PC-9 (cell line): ENCODE measurements at regions of chr1 and their contacts with region 1.

Region 1: DNA sequence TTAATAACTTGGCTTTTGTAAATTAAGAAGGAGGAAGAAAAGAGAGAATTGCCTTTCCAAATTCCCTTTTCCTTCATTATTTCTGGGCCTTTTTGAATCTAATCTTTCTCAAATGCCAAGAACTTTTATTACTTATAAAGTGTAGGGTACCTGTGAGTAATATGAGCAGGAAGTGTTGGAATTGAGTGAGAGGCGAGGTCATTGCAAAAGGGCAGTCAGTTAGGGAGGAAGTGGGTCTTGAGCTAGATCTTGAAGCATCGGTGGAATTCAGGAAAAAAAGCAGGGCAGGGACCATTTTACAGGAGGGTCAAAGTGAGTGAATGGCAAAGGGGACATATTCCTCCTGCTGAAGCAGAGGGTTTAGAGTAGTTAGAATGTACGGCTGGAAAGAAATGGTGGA is 23.4 kb downstream of the DDI2 start:
- DNase-seq: no peak
- H3K4me3 ChIP-seq: no peak overlapping the region
- H3K27ac ChIP-seq: 0 out of 2 replicates have a peak overlapping the region, but pooled peaks have one; percentile 16
- H3K4me1 ChIP-seq: no peaks in the 10 kb centered on the region
- H3K27me3 ChIP-seq: no peaks in the 10 kb centered on the region
- CTCF ChIP-seq: no peak

Region 2: DNA sequence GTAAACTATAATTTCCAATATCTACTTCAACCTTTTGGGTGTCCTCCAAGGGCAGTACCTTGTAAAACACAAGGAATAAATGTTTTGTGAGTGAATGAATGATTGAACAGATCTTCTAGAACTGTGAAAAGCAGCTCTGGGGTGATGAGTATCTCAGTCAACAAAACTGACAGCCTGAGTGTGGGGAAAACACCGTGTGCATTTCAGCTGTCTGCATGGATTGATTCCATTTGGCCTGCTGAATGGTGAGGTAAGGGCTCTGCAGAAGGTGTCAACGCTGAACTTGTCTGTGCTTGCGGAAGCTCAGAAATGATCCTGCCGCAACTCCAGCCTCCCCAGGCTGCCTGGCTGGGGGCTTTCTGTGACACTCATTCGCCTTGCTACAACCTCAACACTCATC is 48.4 kb before region 1 on chr1:
- CTCF ChIA-PET with region 1: interaction called, 11 read pairs
- POLR2A ChIA-PET with region 1: no interaction called
- intact Hi-C with region 1: no loop called
- DNase-seq: no peak
- H3K4me3 ChIP-seq: no peak overlapping the region
- H3K27ac ChIP-seq: no peak overlapping the region
- H3K4me1 ChIP-seq: no peaks in the 10 kb centered on the region
- H3K27me3 ChIP-seq: no peaks in the 10 kb centered on the region
- CTCF ChIP-seq: no peak

Region 3: DNA sequence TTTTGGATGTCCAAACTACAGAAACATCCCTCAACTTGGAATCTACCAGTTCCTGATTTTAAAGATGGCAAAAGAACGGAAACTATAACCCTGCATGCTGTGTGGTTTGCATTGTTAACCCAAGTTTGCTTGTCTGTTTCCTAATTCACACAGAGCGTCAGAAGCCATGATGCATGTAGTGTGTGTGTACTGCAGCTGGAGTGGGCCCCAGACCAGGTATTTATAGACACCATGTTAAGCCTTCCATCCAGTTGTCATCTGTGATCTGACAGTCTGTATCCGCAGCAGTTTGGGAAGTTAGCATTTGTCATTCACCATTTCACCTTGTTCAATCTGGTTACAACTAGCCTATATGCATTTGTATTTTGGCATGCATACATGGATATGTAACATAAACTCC is 15.8 kb after region 1 on chr1:
- CTCF ChIA-PET with region 1: no interaction called
- POLR2A ChIA-PET with region 1: no interaction called
- intact Hi-C with region 1: no loop called
- DNase-seq: no peak
- H3K4me3 ChIP-seq: no peak overlapping the region
- H3K27ac ChIP-seq: no peak overlapping the region
- H3K4me1 ChIP-seq: peaks cover 11% of the 10 kb centered on the region
- H3K27me3 ChIP-seq: no peaks in the 10 kb centered on the region
- CTCF ChIP-seq: no peak

Region 4: GRCh38 chr1:15678578-15678977 is 37.9 kb after region 1 on chr1:
- CTCF ChIA-PET with region 1: no interaction called
- POLR2A ChIA-PET with region 1: no interaction called
- intact Hi-C with region 1: no loop called
- DNase-seq: peak; percentile 67 to 84
- H3K4me3 ChIP-seq: no peak overlapping the region
- H3K27ac ChIP-seq: peak overlapping the region; percentile 49
- H3K4me1 ChIP-seq: peaks cover 50% of the 10 kb centered on the region
- H3K27me3 ChIP-seq: no peaks in the 10 kb centered on the region
- CTCF ChIP-seq: no peak